ENCODE measurements at regions of chr6 and their contacts with region 1.

Region 1: DNA sequence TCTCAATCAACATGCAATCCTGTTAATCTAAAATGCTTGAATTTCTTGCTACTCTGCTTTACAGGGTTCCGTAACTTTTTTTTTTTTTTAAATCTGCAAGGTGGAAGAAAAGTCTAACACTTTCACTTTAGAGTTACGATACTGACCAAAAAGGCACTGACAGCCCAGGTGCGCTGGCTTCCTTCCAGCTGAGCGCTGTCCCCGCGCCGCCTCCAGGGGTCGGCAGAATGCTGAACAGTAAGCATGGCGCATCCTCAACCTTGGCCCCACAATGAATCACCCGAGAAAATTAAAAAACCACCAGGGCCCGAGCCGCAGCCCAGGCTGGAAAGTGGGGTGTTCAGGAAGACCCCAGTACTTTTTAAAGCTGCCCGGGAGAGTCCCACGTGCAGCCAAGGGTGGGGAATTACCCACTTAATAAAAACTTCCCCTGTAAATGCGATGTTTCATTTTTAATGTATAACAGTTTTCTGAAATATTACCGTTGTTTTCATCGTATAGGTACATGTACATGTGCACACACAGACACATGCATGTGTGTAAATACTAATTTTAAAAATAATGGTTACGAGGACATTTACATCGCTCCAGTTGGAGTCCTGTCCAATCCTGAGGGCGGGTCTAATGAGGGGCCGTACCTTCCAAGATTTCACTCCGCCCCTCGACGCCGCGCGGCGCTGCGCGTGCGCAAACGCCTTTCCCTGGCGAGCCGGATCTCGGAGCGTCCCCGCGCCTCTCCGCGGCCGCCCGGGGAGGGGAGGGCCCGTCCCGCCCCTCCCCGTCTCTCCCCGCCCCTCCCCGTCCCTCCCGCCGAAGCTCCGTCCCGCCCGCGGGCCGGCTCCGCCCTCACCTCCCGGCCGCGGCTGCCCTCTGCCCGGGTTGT is at the start of gene GINM1:
- DNase-seq: peak; percentile 97
- H3K4me3 ChIP-seq: peak within 1 kb of the TSS; percentile 75 to 93 (median 85)
- H3K27ac ChIP-seq: peak within 1 kb of the TSS; percentile 82
- H3K4me1 ChIP-seq: peaks cover 16% of the 10 kb centered on the region
- H3K27me3 ChIP-seq: no peaks in the 10 kb centered on the region
- CTCF ChIP-seq: peak; percentile 52 to 71
- POLR2A ChIP-seq: no peak
- total RNA-seq, gene GINM1: 38.0 and 38.2 TPM in 2 replicates

Region 2: GRCh38 chr6:149335924-149336608 is 229.7 kb before region 1 on chr6:
- CTCF ChIA-PET with region 1: no interaction called
- POLR2A ChIA-PET with region 1: no interaction called
- dilution Hi-C with region 1: no loop called
- intact Hi-C with region 1: no loop called
- DNase-seq: peak; percentile 67
- H3K4me3 ChIP-seq: no peak overlapping the region
- H3K27ac ChIP-seq: peak overlapping the region; percentile 61
- H3K4me1 ChIP-seq: peaks cover 43% of the 10 kb centered on the region
- H3K27me3 ChIP-seq: no peaks in the 10 kb centered on the region
- CTCF ChIP-seq: no peak
- POLR2A ChIP-seq: no peak

Region 3: GRCh38 chr6:149648148-149649145 is 82.7 kb after region 1 on chr6 and contains the start of gene KATNA1:
- CTCF ChIA-PET with region 1: interaction called, 4 read pairs
- POLR2A ChIA-PET with region 1: no interaction called
- dilution Hi-C with region 1: no loop called
- intact Hi-C with region 1: loop called (anchors 2 kb)
- DNase-seq: peak; percentile 85
- H3K4me3 ChIP-seq: peak within 1 kb of the TSS; percentile 83 to 95 (median 94)
- H3K27ac ChIP-seq: peak within 1 kb of the TSS; percentile 35
- H3K4me1 ChIP-seq: peaks cover 3% of the 10 kb centered on the region
- H3K27me3 ChIP-seq: no peaks in the 10 kb centered on the region
- CTCF ChIP-seq: no peak
- POLR2A ChIP-seq: peak; percentile 79
- total RNA-seq, gene KATNA1: 15.9 and 16.2 TPM in 2 replicates

Measured in endothelial cell of umbilical vein (primary cell).